Right cardiac atrium (tissue), 5 donors: ENCODE measurements at regions of chr11 and their contacts with region 1.

Region 1: DNA sequence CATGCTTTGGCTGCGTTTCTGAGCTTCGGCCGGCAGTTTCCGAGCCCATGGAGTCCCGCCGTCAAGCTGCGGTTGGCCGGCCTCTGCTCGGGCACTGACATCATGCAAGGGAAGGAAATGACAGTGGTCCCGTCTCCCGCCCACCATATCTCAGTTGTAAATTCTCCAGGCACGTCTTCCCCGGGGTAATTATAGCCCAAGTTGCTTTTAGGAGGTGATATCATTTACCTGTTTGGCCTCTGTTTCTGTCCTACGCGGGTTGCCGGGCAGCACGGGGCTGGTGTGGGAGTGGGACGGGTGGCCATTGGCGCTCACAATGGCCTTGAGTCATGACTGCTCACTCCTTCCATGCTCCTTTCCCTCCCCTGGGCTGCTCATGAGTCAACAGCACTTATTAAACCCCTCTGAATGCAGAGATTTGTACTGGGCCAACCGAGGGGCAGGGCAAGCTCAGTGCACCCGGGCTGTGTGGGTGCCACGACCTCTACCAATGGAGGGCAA is 4.2 kb upstream of the ANO1 start:
- DNase-seq: peak; percentile 76 to 83 (median 81)
- ATAC-seq: peak; percentile 37 to 89
- H3K4me3 ChIP-seq: no peak overlapping the region
- H3K27ac ChIP-seq: no peak overlapping the region
- H3K4me1 ChIP-seq: peaks cover 5% of the 10 kb centered on the region
- H3K27me3 ChIP-seq: no peaks in the 10 kb centered on the region

Region 2: GRCh38 chr11:69949327-69949726 is 124.6 kb before region 1 on chr11:
- intact Hi-C with region 1: loop called in 1 of 4 experiments (anchors 10 kb)
- DNase-seq: peak in 1 of 3 donors; percentile 71
- ATAC-seq: peak; percentile 72 to 82
- H3K4me3 ChIP-seq: no peak overlapping the region
- H3K27ac ChIP-seq: no peak overlapping the region
- H3K4me1 ChIP-seq: peaks cover 2% of the 10 kb centered on the region
- H3K27me3 ChIP-seq: no peaks in the 10 kb centered on the region

Region 3: DNA sequence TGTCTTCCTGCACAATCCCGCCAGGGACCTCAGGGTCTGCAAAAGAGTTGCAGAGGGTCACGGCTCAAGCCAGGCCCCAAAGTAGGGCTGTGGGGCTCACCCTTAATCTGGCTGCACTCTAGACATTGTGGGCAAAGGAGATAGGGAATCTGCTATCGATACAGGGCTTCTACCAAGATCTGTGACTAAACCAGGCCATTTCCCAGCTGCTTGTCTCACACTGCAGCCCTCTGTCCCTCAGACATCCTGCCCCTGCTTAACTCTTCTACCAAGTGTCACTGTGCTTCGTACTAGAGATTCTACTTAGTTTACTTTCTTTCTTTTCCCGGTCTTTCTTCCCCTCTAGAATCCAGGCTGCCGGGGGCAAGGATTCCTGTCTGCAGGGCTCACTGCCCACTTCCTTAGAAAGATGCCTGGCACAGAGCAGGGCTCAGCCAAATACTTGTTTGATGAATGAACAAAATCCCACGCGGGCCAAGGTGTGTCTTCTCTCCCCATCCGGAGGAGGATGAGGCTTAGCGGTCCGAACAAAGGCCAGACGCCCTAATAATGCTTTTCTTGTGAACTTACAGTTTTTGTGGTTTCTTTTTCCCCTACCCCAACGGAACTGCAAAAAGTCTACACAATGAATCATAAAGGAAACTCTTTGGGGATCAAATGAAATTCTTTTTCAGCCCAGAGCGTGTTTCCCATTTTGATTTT is 57.1 kb before region 1 on chr11:
- intact Hi-C with region 1: no loop called
- DNase-seq: no peak
- ATAC-seq: no peak
- H3K4me3 ChIP-seq: no peak overlapping the region
- H3K27ac ChIP-seq: no peak overlapping the region
- H3K4me1 ChIP-seq: no peaks in the 10 kb centered on the region
- H3K27me3 ChIP-seq: no peaks in the 10 kb centered on the region

Region 4: DNA sequence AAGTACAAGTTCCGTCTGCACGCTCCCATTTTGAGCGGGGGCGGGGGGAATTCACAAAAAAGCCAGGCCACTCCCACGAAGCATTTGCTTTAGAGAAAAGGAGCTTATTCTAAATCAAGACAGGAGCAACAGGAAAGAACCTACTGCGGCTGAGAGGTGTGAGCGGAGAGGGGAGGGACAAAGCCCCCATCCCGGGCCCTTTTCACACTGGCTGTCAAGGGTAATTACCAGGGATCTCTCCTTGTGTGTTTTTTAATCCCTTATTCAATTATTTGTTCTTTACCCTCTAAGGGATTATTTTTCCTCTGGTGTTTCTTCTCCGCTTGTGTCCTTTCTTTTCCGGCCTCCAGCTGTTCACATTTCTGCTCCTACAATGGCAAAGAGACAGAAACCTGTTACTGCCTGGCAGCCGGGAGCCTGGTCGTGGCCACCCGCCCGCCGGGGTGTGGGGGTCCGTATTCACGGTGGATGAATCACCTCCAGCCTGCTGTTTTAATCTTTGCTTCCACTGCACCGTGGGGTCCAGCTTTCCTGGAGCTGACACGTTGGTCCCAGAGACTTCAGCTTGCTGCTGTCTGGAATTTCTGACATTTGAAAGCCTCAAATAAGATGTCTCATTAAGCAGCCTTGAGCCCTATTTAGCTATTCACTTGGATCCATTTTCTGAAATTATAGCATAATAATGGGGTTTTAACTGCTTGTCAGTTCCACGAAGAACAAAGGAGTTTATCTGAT is 67.7 kb after region 1 on chr11:
- intact Hi-C with region 1: no loop called
- DNase-seq: no peak
- ATAC-seq: no peak
- H3K4me3 ChIP-seq: no peak overlapping the region
- H3K27ac ChIP-seq: no peak overlapping the region
- H3K4me1 ChIP-seq: no peaks in the 10 kb centered on the region
- H3K27me3 ChIP-seq: no peaks in the 10 kb centered on the region

Region 5: GRCh38 chr11:70183483-70184169 is 109.7 kb after region 1 on chr11:
- intact Hi-C with region 1: no loop called
- DNase-seq: peak in 2 of 3 donors; percentile 44 to 50
- ATAC-seq: peak in 1 of 2 donors; percentile 37
- H3K4me3 ChIP-seq: no peak overlapping the region
- H3K27ac ChIP-seq: no peak overlapping the region
- H3K4me1 ChIP-seq: no peaks in the 10 kb centered on the region
- H3K27me3 ChIP-seq: no peaks in the 10 kb centered on the region

Region 6: GRCh38 chr11:70796648-70797227 is 722.8 kb after region 1 on chr11:
- intact Hi-C with region 1: no loop called
- DNase-seq: no peak
- ATAC-seq: no peak
- H3K4me3 ChIP-seq: no peak overlapping the region
- H3K27ac ChIP-seq: no peak overlapping the region
- H3K4me1 ChIP-seq: no peaks in the 10 kb centered on the region
- H3K27me3 ChIP-seq: no peaks in the 10 kb centered on the region